GM23248 (cell line): ENCODE measurements at regions of chr7 and their contacts with region 1.

Region 1: GRCh38 chr7:16083931-16084330 is 337.4 kb downstream of the CRPPA start:
- DNase-seq: no peak
- H3K4me3 ChIP-seq: no peak overlapping the region
- H3K27ac ChIP-seq: no peak overlapping the region
- H3K4me1 ChIP-seq: no peaks in the 10 kb centered on the region
- H3K27me3 ChIP-seq: no peaks in the 10 kb centered on the region

Region 2: DNA sequence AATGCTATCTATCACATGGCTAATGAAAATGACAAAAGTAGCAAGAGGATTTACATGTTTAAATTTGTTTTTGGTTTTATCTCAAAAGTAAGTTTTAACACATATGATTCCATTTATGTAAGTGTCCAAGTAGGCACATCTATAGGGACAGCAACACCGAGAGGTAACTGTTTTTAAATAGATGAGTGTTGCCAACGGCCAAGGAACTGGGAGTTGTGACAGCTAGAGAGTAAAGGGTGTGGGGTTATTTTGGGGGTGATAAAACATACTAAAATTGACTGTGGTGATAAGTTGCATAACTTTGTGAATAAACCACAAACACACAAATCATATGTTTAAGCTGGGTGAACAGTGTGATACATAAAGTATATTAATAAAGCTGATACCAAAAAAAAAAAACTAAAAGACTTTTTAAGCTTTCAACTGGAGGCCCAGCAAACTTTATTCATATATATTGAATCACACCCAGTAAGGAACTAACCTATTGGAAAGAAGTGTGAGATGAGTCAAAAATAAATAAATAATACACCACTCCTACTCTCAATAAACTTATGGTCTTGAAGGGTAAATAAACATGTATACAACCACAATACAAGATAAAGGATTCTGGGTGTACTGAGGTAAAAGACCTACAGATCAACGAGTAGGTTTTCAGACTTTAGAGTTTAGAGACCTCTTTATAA is 475.7 kb after region 1 on chr7:
- in situ Hi-C with region 1: loop called (anchors 10 kb)
- DNase-seq: peak; percentile 7
- H3K4me3 ChIP-seq: no peak overlapping the region
- H3K27ac ChIP-seq: no peak overlapping the region
- H3K4me1 ChIP-seq: peaks cover 4% of the 10 kb centered on the region; the same call in 1 of the 2 replicates
- H3K27me3 ChIP-seq: no peaks in the 10 kb centered on the region